Activated CD4-positive, alpha-beta T cell treated with anti-CD3 and anti-CD28 coated beads for 36 hours (primary cell): ENCODE measurements at regions of chr17 and their contacts with region 1.

Region 1: GRCh38 chr17:81553018-81553615 is 964 bp upstream of the FAAP100 start:
- DNase-seq: peak; percentile 91
- ATAC-seq: peak; percentile 78
- H3K4me3 Mint-ChIP-seq: peak overlapping the region; percentile 89
- H3K27ac Mint-ChIP-seq: peak overlapping the region; percentile 86
- H3K4me1 Mint-ChIP-seq: peaks cover 38% of the 10 kb centered on the region
- H3K27me3 Mint-ChIP-seq: no peaks in the 10 kb centered on the region

Region 2: GRCh38 chr17:81034779-81035388 is 518.2 kb before region 1 on chr17 and contains the start of gene BAIAP2:
- CTCF ChIA-PET with region 1: no interaction called
- POLR2A ChIA-PET with region 1: no interaction called
- intact Hi-C with region 1: loop called in 1 of 2 experiments (anchors 1 kb)
- DNase-seq: peak; percentile 99
- ATAC-seq: peak; percentile 91
- H3K4me3 Mint-ChIP-seq: peak within 1 kb of the TSS; percentile 72
- H3K27ac Mint-ChIP-seq: peak within 1 kb of the TSS; percentile 47
- H3K4me1 Mint-ChIP-seq: peaks cover 20% of the 10 kb centered on the region
- H3K27me3 Mint-ChIP-seq: peaks cover 19% of the 10 kb centered on the region
- total RNA-seq, gene BAIAP2: 4.6 to 5.0 TPM

Region 3: DNA sequence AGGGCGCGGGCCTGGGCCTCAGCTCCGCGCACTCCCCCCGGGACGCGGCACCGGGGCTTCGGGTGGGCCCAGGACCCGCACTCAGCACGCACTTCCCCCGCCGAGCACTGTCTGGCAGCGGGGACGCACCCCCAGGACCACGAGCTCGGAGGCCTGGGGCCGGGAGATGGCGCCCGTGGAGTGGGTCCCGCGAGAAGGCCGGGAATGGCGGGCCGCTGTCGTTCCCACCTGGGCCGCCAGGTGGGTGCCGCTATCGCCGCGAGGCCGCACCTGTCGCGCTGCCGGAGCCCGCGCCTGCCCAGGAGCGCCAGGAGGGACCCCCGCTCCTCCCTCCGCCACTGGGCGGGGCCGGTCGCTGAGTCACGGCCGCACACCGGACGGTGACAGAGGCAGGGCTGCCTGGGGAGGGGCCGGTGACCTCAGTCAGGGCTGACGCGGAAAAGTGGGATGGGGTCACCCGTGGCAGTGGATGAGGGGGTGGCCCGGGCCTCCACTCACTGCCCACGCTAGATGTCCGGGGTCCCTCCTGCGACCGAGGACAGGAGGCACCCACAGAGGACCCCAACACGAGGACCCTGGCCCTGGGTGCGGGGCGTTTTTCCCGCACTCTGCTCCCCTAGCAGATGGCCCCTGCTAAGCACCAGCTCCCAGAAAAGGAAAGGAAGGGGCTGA is 33.7 kb before region 1 on chr17:
- CTCF ChIA-PET with region 1: interaction called, 4 read pairs
- POLR2A ChIA-PET with region 1: interaction called, 3 read pairs
- intact Hi-C with region 1: loop called (anchors 1 to 2 kb)
- DNase-seq: peak; percentile 79
- ATAC-seq: peak; percentile 47
- H3K4me3 Mint-ChIP-seq: peak overlapping the region; percentile 40
- H3K27ac Mint-ChIP-seq: no peak overlapping the region
- H3K4me1 Mint-ChIP-seq: peaks cover 14% of the 10 kb centered on the region
- H3K27me3 Mint-ChIP-seq: peaks cover 2% of the 10 kb centered on the region

Region 4: GRCh38 chr17:81666342-81667191 is 113.5 kb after region 1 on chr17 and contains the starts of genes CCDC137 and OXLD1:
- CTCF ChIA-PET with region 1: no interaction called
- POLR2A ChIA-PET with region 1: interaction called, 3 read pairs
- intact Hi-C with region 1: loop called in 1 of 2 experiments (anchors 1 kb)
- DNase-seq: peak; percentile 97
- ATAC-seq: peak; percentile 91
- H3K4me3 Mint-ChIP-seq: peak within 1 kb of the TSS; percentile 91
- H3K27ac Mint-ChIP-seq: peak within 1 kb of the TSS; percentile 97
- H3K4me1 Mint-ChIP-seq: peaks cover 53% of the 10 kb centered on the region
- H3K27me3 Mint-ChIP-seq: no peaks in the 10 kb centered on the region
- total RNA-seq, gene CCDC137: 30.0 to 36.6 TPM
- total RNA-seq, gene OXLD1: 29.4 to 45.3 TPM

Region 5: DNA sequence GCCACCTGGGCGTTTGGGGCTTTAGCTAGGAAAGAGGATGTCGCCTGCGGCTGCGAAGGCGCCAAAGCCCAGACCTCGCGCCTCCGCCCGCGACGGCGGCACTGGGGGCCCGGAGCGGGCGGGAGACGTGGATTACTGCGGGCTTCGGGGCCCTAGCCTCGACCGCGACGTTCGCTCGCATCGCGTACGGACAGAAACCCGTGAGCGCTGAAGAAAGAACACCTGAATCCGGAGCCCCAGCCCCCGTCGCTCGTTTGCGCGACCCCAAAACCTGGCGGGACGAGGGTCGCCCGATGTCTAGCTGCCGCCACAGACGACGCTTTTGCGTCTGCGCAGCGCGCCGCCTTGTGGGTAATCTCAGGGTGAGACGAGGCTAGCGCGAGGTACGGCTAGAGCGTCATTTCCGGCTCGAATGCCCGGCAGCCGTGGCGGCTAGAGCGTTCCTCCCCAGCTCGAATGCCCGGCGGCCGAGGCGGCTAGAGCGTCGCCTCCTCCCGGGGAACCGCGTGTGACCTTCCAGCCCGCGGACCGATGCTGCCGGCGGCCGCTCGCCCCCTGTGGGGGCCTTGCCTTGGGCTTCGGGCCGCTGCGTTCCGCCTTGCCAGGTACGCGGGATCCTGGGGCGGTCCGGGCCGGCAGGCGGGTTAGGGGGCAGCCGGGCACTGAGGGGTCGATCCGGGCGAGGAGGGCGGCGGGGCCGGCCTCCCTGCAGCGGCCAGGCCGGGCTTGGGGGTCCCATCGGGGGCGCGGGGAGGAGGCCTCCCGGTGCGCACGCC is 150.0 kb after region 1 on chr17 and contains the start of gene MRPL12:
- CTCF ChIA-PET with region 1: no interaction called
- POLR2A ChIA-PET with region 1: interaction called, 3 read pairs
- intact Hi-C with region 1: loop called in 1 of 2 experiments (anchors 1 kb)
- DNase-seq: peak; percentile 95
- ATAC-seq: peak; percentile 89
- H3K4me3 Mint-ChIP-seq: peak within 1 kb of the TSS; percentile 86
- H3K27ac Mint-ChIP-seq: peak within 1 kb of the TSS; percentile 97
- H3K4me1 Mint-ChIP-seq: peaks cover 24% of the 10 kb centered on the region
- H3K27me3 Mint-ChIP-seq: no peaks in the 10 kb centered on the region
- total RNA-seq, gene MRPL12: 94.0 to 116 TPM